ENCODE measurements at regions of chr12 and their contacts with region 1.

Region 1: DNA sequence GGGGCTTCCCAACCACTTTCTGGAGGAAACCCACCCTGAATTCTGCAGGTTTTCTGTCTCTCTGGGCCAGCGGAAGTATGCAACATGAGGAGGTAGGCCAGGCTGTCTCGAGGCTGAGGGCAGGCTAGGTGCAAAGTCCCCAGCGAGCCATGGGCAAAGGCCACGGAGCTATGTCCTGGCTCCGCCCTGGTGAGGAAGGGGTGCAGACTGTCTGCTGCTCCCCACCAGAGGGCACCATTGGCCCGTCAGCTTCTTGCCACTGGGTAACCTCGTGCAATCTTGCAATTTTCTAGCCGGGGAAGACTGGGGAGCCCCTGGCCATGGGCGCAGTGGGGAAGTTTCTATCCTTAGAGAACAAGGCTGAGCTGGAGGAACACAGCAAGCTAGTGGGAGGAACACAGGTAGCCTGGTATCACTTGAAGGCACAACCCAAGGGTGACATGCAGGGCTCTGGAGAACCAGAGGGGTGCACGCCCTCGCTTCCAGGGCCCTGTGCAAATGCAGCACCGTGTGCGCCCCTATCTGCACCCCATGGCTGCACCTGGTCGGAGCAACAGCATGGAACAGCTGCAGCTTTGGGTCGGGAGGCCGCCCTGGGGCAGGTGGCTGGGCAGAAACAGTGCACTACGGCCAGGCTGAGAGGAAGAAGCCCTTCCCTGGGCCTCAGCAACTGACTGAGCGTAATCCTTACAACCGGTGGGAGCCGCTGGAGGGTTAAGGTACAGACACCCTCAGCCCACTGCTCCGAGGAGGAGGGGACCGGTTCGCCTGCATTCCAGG is 27.6 kb upstream of the RPLP0 start:
- DNase-seq: peak; percentile 80

Region 2: GRCh38 chr12:120194534-120195395 is 33.7 kb before region 1 on chr12 and contains the start of gene GCN1:
- CTCF ChIA-PET with region 1: no interaction called
- POLR2A ChIA-PET with region 1: interaction called, 185 read pairs
- DNase-seq: peak; percentile 80

Region 3: DNA sequence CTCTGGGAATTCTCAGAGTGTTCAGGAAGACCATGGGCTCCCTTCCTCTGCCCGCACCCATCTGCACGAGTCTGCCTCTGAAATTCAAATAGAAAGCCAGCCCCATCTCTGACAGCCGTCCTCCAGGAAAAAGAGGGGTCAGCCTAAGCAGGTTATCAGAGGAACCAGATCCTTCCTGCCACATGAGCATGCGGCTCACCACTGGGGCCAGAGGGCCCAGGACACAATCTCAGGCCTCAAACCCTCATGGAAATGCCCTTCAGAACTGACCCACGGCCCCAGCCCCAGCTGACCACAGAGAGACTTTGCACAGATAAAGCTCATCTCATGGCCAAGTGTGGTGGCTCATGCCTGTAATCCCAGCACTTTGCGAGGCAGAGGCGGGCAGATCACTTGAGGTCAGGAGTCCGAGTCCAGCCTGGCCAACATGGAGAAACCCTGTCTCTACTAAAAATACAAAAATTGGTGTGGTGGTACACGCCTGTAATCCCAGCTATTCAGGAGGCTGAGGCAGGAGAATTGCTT is 13.9 kb after region 1 on chr12:
- CTCF ChIA-PET with region 1: interaction called, 10 read pairs
- POLR2A ChIA-PET with region 1: interaction called, 3 read pairs
- DNase-seq: no peak

Region 4: DNA sequence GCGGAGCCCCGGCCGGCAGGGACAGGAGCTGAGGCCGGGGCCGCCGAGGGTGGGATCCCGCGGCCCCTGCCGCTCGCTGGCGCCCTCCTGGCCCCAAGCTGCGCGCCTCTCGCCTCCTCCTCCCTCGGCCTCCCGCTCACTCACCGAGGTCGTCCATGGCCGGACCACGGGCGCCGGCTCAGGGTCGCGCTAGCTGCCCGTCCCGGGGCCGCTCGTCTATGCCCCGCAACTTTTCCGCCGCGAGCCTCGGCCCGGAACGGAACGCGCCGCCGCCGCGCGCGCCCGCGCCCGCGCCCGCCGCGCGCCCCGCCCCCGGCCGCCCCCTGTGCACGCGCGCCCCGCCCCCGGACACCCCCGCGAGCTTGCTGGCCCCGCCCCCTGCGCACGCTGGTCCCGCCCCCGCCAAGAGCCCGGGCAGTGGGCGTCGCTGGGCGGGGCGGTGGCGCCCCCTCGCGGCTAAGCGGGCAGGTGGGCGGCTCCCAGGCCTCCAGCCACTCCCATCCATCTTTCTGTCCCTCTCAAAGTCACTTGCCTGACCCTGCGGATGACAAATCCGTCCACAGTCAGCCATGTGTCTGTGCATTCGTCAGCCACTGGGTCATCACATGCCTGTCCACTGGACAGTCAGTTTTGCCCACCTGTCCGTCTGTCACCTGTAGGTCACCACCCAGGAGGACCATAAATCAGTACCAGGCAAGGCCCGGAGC is 37.1 kb after region 1 on chr12 and contains the start of gene PXN:
- CTCF ChIA-PET with region 1: interaction called, 222 read pairs
- POLR2A ChIA-PET with region 1: interaction called, 139 read pairs
- DNase-seq: peak; percentile 97

Region 5: DNA sequence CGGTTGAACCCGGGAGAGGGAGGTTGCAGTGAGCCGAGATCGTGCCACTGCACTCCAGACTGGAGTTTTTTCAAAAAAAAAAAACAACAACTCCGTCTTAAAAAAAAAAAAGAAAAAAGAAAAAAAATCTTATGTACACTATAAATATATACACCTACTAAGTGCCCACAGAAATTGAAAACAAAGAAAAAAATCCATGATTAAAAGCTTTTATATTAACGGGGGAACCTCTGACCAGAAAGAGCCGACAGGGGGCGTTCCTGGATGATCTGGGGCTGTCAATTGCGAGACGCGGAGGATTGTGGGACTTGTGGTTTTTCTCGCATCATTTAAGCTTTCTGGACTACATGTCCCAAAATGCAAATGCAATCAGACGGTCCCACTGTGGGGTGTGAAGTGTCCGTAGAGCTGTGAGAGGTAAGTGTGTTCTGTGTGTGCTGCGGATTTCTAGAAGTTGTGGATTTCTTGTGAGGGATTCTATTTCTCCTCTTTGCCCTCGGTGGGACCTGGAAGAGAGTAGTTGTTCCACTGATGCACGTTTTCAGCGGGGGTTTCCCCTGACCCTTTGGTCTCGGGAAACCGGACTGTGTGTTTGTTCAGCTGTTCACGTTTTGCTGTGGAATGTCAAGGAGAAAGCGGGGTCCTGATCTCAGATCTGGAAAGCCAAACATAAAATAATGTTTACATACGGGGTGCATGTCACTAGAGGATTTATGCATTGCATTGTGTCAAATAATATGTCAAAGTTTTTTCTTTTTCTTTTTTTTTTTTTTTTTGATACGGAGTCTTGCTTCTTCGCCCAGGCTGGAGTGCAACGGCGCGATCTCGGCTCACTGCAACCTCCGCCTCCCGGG is 73.7 kb after region 1 on chr12 and contains the start of gene SIRT4:
- CTCF ChIA-PET with region 1: interaction called, 10 read pairs
- POLR2A ChIA-PET with region 1: interaction called, 4 read pairs
- DNase-seq: peak; percentile 88

Region 6: GRCh38 chr12:120432772-120433525 is 204.5 kb after region 1 on chr12:
- CTCF ChIA-PET with region 1: no interaction called
- POLR2A ChIA-PET with region 1: no interaction called
- DNase-seq: no peak

Measured in HEK293T (cell line).